Activated CD4-positive, alpha-beta T cell treated with anti-CD3 and anti-CD28 coated beads for 36 hours (primary cell): ENCODE measurements at regions of chr15 and their contacts with region 1.

Region 1: DNA sequence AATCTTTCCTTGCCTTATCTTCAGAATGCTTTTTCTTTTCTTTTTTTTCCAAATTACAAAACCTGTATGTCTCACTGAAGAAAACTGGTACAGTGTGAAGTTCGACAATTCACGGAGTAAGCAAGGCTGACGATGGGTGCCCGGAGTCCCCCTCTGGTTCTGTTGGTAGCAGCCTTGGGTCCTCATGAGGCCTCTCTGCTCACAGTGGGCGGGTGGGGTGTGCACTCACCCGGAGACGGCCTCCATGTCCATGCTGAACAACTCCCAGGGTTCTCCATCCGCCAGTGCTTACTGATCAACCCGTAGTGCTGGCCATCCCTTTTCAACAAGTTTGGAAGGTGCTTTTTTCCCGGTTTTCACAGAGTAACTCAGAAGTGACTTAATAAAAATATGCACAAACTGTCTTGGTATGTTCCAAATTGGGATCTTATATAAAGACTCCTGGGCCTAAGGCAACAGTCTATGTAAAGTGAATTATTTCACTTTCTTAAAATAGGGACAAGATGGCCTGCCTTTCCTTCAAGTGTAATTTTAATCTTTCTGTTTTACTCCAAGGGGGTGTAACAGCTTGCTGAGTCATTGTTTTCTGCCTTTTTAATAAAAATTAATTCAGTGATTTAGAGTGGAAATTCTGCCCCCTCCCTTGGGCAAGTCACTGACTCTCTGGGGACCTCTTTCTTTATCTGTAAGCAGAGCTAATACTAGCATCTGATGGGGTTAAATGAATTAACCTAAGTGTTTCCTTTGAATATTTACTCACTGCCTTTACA is 23.7 kb downstream of the LRRK1 start:
- DNase-seq: no peak
- ATAC-seq: no peak
- H3K4me3 Mint-ChIP-seq: no peak overlapping the region
- H3K27ac Mint-ChIP-seq: no peak overlapping the region
- H3K4me1 Mint-ChIP-seq: no peaks in the 10 kb centered on the region
- H3K27me3 Mint-ChIP-seq: peaks cover 5% of the 10 kb centered on the region

Region 2: GRCh38 chr15:100975043-100975442 is 32.2 kb after region 1 on chr15:
- CTCF ChIA-PET with region 1: no interaction called
- POLR2A ChIA-PET with region 1: interaction called, 10 read pairs
- intact Hi-C with region 1: no loop called
- DNase-seq: no peak
- ATAC-seq: no peak
- H3K4me3 Mint-ChIP-seq: no peak overlapping the region
- H3K27ac Mint-ChIP-seq: no peak overlapping the region
- H3K4me1 Mint-ChIP-seq: peaks cover 3% of the 10 kb centered on the region
- H3K27me3 Mint-ChIP-seq: peaks cover 47% of the 10 kb centered on the region